ENCODE measurements at regions of chr12 and their contacts with region 1.

Region 1: DNA sequence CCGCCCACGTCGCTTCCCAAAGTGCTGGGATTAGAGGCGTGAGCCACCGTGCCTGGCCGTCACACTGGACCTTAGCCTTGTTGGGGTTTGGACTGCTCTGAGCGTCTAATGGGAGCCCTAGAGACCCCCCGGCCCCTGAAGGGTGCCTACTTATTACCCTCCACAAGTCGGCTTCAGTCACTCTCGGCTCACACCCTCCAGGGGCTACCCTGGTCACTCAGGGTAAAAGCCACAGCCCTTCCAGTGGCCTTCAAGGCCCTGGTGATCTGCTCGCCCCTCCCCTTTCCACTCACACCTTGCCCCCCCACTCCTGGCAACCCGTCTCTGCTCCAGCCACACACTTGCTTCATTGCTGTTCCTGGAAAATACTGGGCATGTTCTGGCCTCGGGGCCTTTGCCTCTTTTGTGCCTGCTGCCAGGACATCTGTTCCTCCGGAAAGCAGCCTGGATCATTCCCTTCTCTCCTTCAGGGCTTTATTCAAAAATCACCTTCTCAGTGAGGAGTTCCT is 3.6 kb upstream of the MORN3 start:
- DNase-seq: peak in 1 of 2 donors; percentile 23
- ATAC-seq: peak; percentile 12 to 27
- H3K4me3 ChIP-seq: peak overlapping the region; percentile 26 to 56 (median 44)
- H3K27ac ChIP-seq: peak overlapping the region in 1 of 4 donors; percentile 25
- H3K4me1 ChIP-seq: peaks cover 0 to 6% of the 10 kb centered on the region in 2 donors
- H3K27me3 ChIP-seq: peaks cover 0 to 7% (median 0%) of the 10 kb centered on the region in 3 donors
- CTCF ChIP-seq: no peak
- POLR2A ChIP-seq: no peak

Region 2: DNA sequence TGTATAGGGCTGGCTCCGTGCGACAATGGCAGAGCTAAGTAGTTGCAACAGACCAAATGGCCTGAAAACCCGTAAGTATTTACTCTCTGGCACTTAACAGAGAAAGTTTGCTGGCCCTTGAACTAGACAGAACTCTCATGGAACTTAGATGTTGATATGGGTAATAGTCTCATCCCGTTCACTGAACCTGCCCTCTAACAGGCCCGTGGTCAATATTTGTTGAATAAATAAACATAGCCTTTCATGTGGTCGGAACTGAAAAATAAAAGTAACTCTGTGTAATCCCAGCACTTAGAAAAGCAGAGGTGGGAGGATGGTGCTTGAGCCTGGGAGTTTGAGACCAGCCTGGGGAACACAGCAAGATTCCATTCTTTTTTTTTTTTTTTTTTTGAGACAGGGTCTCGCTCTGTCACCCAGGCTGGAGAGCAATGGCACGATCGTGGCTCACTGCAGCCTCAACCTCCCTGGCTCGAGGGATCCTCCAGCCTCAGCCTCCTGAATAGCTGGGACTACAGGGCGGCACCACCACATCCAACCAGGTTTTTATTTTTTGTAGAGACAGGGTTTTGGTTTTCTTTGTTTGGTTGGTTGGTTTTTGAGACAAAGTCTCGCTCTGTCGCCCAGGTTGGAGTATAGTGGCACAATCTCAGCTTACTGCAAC is 122.0 kb before region 1 on chr12:
- in situ Hi-C with region 1: loop called in 2 of 4 experiments (anchors 5 kb)
- intact Hi-C with region 1: no loop called
- DNase-seq: no peak
- ATAC-seq: no peak
- H3K4me3 ChIP-seq: no peak overlapping the region
- H3K27ac ChIP-seq: no peak overlapping the region
- H3K4me1 ChIP-seq: peaks cover 3 to 4% of the 10 kb centered on the region in 2 donors
- H3K27me3 ChIP-seq: no peaks in the 10 kb centered on the region
- CTCF ChIP-seq: no peak
- POLR2A ChIP-seq: no peak

Region 3: DNA sequence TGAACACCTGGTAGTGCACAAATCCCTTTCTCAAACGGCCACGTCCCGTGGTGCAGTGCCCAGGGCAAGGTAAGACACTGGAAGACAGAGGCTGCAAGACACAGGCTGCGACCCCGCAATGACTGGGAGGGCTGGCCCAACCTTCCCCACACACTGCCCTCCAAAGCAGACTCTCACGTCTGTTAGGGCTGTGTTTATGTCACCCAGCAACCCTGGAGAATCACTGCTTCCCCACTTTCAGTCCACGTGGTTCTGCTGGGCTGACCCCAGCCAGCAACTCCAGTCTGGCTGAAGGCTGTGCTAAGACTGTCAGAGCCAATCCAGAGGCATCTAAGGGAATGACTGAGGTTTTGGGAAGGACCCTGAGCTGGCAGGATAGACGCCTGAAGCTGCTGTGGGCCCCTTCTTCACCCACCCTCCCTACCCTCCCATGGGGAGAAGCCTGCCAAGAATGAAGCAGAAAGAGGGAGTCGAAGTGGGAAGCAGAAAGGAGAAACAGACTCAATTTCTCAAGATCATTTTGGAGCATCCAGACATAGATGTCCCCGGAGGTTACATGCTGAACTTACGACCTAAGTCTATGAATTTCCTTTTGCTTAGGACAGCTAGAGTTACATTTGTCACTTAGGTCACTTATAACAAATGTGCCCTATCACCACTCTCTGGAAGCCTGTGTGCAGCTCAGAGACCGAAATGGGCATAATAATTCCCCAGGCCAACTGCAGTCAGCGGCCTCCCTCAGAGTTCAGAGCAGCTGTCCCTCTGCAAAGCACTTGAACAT is 103.9 kb before region 1 on chr12:
- in situ Hi-C with region 1: loop called in 1 of 4 experiments (anchors 10 kb)
- intact Hi-C with region 1: no loop called
- DNase-seq: peak in 1 of 2 donors; percentile 41
- ATAC-seq: peak; percentile 57 to 70
- H3K4me3 ChIP-seq: peak overlapping the region in 1 of 4 donors; percentile 6
- H3K27ac ChIP-seq: peak overlapping the region; percentile 70 to 73 (median 72)
- H3K4me1 ChIP-seq: peaks cover 15 to 27% of the 10 kb centered on the region in 2 donors
- H3K27me3 ChIP-seq: no peaks in the 10 kb centered on the region
- CTCF ChIP-seq: no peak
- POLR2A ChIP-seq: no peak

Region 4: GRCh38 chr12:121793838-121794533 is 120.9 kb after region 1 on chr12:
- in situ Hi-C with region 1: no loop called
- intact Hi-C with region 1: no loop called
- DNase-seq: peak; percentile 80 to 88
- ATAC-seq: peak; percentile 47 to 58
- H3K4me3 ChIP-seq: peak overlapping the region; percentile 56 to 73 (median 59)
- H3K27ac ChIP-seq: peak overlapping the region; percentile 97 to 100 (median 99)
- H3K4me1 ChIP-seq: peaks cover 55 to 56% of the 10 kb centered on the region in 2 donors
- H3K27me3 ChIP-seq: no peaks in the 10 kb centered on the region
- CTCF ChIP-seq: peak; percentile 99 to 100 (median 100)
- POLR2A ChIP-seq: no peak

Region 5: GRCh38 chr12:121933522-121934308 is 260.7 kb after region 1 on chr12:
- in situ Hi-C with region 1: no loop called
- intact Hi-C with region 1: no loop called
- DNase-seq: no peak
- ATAC-seq: no peak
- H3K4me3 ChIP-seq: no peak overlapping the region
- H3K27ac ChIP-seq: no peak overlapping the region
- H3K4me1 ChIP-seq: no peaks in the 10 kb centered on the region
- H3K27me3 ChIP-seq: no peaks in the 10 kb centered on the region
- CTCF ChIP-seq: no peak
- POLR2A ChIP-seq: no peak